ENCODE measurements at regions of chr19 and their contacts with region 1.

Region 1: DNA sequence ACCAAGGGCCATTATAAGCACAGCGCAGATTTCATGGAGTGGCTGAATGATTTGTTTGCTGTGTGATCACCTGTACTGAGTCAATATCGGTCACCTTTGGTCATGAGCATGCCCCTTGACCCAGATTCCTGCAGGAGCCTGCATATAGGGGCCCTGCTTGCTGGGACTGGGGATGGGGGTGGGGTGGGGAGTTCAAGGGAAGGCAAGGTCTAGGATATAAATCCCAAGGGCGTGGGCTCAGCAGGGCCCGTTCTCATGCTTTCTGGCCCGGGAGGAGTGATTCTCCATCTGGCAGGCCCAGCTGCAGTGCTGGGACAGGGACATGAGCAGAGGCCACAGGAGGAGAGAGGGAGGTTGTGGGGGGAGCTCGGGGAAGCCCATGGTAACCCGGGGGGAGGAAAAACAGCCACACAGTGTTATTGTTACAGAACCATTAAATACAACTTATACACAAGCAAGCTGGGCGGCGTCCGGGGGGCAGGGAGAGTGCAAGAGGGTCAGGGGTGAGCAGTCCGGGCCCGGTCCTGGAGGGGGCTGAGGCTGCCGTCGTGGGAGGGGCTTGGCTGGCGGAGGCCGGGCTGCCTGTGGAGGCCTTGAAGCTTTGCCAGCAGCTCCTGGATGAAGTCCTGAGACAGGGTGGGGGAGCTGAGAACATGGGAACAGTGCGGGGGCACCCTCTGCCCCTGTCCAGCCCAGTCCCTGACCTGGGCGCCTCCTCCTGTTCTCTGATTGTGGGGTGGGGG is 5.2 kb downstream of the PPP1R14A start:
- DNase-seq: no peak
- H3K4me3 ChIP-seq: peak overlapping the region in 1 of 2 donors; percentile 18
- H3K27ac ChIP-seq: peak overlapping the region; percentile 79 to 89
- H3K4me1 ChIP-seq: no peaks in the 10 kb centered on the region
- H3K27me3 ChIP-seq: no peaks in the 10 kb centered on the region
- CTCF ChIP-seq: no peak
- POLR2A ChIP-seq: no peak

Region 2: GRCh38 chr19:38062959-38063761 is 187.8 kb before region 1 on chr19:
- intact Hi-C with region 1: no loop called
- DNase-seq: no peak
- H3K4me3 ChIP-seq: no peak overlapping the region
- H3K27ac ChIP-seq: peak overlapping the region; percentile 53 to 66
- H3K4me1 ChIP-seq: peaks cover 19% of the 10 kb centered on the region
- H3K27me3 ChIP-seq: no peaks in the 10 kb centered on the region
- CTCF ChIP-seq: no peak
- POLR2A ChIP-seq: no peak

Region 3: GRCh38 chr19:38315657-38316476 is 64.9 kb after region 1 on chr19 and contains the start of gene YIF1B:
- intact Hi-C with region 1: loop called (anchors 5 kb)
- DNase-seq: peak; percentile 96
- H3K4me3 ChIP-seq: peak within 1 kb of the TSS; percentile 37 to 48
- H3K27ac ChIP-seq: peak within 1 kb of the TSS; percentile 66 to 79
- H3K4me1 ChIP-seq: no peaks in the 10 kb centered on the region
- H3K27me3 ChIP-seq: no peaks in the 10 kb centered on the region
- CTCF ChIP-seq: peak in 1 of 4 experiments; percentile 26
- POLR2A ChIP-seq: peak; percentile 38
- total RNA-seq, gene YIF1B: 34.7 to 71.9 TPM

Region 4: DNA sequence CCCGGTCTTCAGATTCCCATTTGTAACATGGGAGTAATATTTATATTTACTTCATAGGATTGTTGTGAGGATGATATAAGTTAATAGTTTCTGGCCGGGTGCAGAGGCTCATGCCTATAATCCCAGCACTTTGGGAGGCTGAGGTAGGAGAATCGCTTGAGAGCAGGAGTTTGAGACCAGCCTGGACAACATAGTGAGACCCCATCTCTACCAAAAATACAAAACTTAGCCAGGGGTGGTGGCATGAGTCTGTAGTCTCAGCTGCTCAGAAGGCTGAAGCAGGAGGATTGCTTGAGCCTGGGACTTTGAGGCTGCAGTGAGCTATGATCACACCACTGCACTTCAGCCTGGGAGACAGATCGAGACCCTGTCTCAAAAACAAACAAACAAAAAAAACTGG is 95.8 kb after region 1 on chr19:
- intact Hi-C with region 1: no loop called
- DNase-seq: no peak
- H3K4me3 ChIP-seq: no peak overlapping the region
- H3K27ac ChIP-seq: no peak overlapping the region
- H3K4me1 ChIP-seq: no peaks in the 10 kb centered on the region
- H3K27me3 ChIP-seq: no peaks in the 10 kb centered on the region
- CTCF ChIP-seq: no peak
- POLR2A ChIP-seq: no peak